AG04449 (cell line): ENCODE measurements at regions of chr12 and their contacts with region 1.

Region 1: DNA sequence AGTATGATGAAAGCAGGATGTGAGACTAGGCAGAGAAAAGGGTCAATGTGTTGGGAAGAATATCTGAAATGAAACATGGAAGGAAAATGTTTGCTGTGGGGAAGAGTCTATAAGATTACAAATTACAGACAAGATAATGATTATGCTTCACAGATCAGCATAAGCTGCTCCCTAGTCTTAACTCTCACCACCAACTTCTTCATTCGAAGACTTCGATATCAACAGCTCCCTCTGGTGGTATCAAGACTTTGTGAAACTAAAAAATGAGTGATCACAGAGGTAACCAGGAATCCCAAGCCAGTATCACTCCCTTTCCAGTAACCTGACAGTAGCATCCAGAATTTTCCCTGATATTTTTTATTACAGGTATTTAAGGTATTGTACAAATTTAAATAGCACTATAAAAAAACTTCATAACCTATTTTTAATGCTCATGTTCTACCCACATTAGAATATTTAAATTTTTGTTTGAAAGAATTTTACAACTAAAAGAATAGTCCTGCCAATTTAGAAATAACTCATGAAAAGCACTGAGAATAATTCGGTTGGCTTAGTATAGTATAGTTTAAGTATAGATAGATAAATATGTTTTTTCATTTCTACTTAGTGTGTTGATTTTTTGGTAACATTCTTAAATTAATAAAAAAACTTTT is 84.4 kb downstream of the C2CD5 start:
- DNase-seq: no peak
- H3K4me3 ChIP-seq: no peak overlapping the region
- CTCF ChIP-seq: peak; percentile 64

Region 2: DNA sequence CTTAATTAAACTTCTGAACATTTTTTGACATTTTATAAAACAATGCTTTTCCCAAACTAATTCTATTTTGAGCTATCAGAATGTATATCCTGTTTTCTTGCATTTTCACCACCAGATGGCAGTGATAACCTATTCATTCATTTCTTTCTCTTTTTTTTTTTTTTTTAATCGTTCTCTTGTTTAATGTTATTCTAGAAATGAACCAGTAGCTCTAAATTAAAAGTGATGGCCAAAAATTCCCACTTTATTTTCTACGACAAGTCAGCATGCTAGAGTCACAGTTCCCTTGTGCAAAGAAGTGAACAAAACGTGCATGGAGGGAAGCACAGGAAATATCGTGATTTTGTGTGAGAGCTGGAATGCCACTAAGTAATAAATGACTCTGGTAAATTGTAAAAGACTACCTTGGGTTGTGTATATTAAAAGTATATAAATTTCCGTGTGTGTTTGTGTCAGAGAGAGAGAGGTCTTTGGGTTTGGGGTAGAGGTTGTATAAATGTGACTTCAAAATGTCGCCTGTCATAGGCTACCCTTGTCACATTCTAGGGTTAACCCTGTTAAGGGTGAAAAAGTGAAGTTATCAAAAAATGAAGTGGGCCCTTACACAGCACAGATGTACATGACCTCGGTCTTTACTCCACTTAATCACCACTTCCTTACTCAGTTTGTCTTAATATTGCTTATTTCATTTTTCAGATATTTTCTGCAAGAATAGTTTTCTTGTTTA is 761.9 kb before region 1 on chr12:
- CTCF ChIA-PET with region 1: interaction called, 22 read pairs
- POLR2A ChIA-PET with region 1: no interaction called
- DNase-seq: no peak
- H3K4me3 ChIP-seq: no peak overlapping the region
- CTCF ChIP-seq: peak; percentile 18

Region 3: DNA sequence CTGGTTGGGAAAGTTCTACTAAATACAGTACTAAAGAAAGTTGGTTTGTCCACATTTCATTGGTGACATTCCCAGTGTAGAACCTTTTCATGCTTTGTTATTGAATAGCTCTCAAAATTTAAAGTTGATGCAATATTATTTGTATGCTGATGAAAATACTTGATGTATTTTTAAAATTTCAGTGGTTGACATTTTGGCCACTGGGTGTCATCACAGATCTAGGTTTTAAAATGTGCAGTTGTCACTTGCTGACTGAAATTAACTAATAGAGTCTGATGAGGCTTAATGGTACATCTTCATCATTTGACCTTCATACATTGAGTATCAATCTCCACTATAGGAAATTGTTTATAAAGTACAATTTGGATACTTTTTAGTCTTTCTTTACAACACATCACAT is 376.8 kb before region 1 on chr12:
- CTCF ChIA-PET with region 1: interaction called, 42 read pairs
- POLR2A ChIA-PET with region 1: no interaction called
- DNase-seq: no peak
- H3K4me3 ChIP-seq: no peak overlapping the region
- CTCF ChIP-seq: no peak

Region 4: DNA sequence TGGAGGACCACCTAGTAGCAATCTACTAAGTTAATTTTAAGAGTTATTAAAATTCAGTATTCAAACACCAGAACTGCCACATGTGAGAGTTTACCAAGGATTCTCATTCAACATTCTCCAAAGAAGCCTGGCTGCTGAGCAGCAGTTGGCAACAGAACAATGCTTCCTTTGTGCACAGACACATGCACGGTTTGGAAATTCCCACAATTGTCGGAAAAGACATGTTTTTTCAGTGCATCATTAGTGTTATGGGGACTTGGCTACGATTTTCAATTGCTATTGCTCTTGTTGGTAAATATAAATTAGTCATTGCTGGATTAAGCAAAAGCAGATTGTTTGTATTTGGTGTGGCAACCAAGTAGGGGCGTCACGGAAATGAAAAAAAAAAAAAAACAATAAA is 147.6 kb before region 1 on chr12:
- CTCF ChIA-PET with region 1: no interaction called
- POLR2A ChIA-PET with region 1: no interaction called
- DNase-seq: no peak
- H3K4me3 ChIP-seq: no peak overlapping the region
- CTCF ChIP-seq: no peak

Region 5: GRCh38 chr12:22443379-22444316 is 16.3 kb before region 1 on chr12:
- CTCF ChIA-PET with region 1: interaction called, 90 read pairs
- POLR2A ChIA-PET with region 1: no interaction called
- DNase-seq: peak; percentile 17
- H3K4me3 ChIP-seq: no peak overlapping the region
- CTCF ChIP-seq: peak; percentile 85

Region 6: GRCh38 chr12:22477166-22477893 is 17.4 kb after region 1 on chr12:
- CTCF ChIA-PET with region 1: interaction called, 59 read pairs
- POLR2A ChIA-PET with region 1: no interaction called
- DNase-seq: peak; percentile 34
- H3K4me3 ChIP-seq: no peak overlapping the region
- CTCF ChIP-seq: no peak

Region 7: DNA sequence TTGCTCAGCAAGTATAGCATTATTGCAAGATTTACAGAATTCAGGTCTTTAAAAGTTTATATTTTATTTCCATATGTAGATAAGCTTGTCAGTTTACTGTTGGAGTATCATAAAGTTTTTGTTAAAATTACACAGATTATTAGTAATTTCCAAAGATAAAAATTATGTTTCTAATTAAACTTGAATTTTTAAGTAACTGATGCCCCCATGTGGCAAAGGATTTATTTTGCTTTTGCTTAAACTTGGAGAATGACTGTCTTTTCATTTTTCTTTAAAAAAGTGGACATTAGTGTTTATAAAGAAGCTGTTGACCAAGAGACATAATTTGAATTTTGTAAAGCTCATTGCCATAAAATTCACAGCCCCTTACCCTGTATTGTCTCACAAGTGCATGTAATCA is 210.8 kb after region 1 on chr12:
- CTCF ChIA-PET with region 1: interaction called, 12 read pairs
- POLR2A ChIA-PET with region 1: no interaction called
- DNase-seq: no peak
- H3K4me3 ChIP-seq: no peak overlapping the region
- CTCF ChIP-seq: no peak

Region 8: GRCh38 chr12:22914533-22914932 is 454.6 kb after region 1 on chr12:
- CTCF ChIA-PET with region 1: no interaction called
- POLR2A ChIA-PET with region 1: no interaction called
- DNase-seq: no peak
- H3K4me3 ChIP-seq: no peak overlapping the region
- CTCF ChIP-seq: no peak